HepG2 (cell line): ENCODE measurements at regions of chr5 and their contacts with region 1.

Region 1: GRCh38 chr5:103139264-103139865 is 19.3 kb downstream of the PPIP5K2 start:
- DNase-seq: peak; percentile 69
- ATAC-seq: peak; percentile 98
- H3K4me3 ChIP-seq: no peak overlapping the region
- H3K27ac ChIP-seq: no peak overlapping the region
- H3K4me1 ChIP-seq: no peaks in the 10 kb centered on the region
- H3K27me3 ChIP-seq: no peaks in the 10 kb centered on the region
- CTCF ChIP-seq: peak; percentile 90
- EP300 ChIP-seq: no peak
- POLR2A ChIP-seq: no peak
- RAD21 ChIP-seq: peak; percentile 78

Region 2: DNA sequence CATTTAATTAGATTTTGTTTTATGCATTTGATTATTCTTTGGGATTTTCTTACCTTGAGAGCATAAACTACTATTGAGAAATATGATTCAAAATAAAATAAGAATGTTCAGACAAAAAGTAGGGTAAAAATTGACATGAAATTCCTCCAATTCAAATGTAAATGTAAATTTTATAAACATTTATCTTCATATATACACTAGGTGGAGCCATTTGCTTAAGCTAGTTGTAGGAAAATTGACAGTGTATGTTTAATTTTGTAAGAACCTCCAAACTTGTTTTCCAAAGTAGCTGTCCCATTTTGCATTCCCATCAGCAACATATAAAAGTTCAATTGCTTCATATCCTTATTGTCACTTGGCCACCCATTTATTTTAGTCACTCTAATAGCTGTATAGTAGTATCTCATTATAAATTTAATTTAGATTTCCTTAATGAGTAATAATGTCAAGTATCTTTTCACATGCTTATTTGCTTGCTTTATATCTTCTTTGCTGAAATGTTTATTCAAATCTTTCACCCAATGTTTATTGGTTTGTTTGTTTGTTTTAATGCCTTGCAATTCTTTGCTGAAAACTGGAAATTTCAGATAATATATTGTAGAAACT is 602.9 kb before region 1 on chr5:
- CTCF ChIA-PET with region 1: no interaction called
- POLR2A ChIA-PET with region 1: no interaction called
- in situ Hi-C with region 1: no loop called
- intact Hi-C with region 1: loop called (anchors 5 kb)
- DNase-seq: no peak
- ATAC-seq: no peak
- H3K4me3 ChIP-seq: no peak overlapping the region
- H3K27ac ChIP-seq: no peak overlapping the region
- H3K4me1 ChIP-seq: peaks cover 4% of the 10 kb centered on the region; the same call in 1 of the 2 replicates
- H3K27me3 ChIP-seq: no peaks in the 10 kb centered on the region
- CTCF ChIP-seq: no peak
- EP300 ChIP-seq: no peak
- POLR2A ChIP-seq: no peak
- RAD21 ChIP-seq: no peak

Region 3: GRCh38 chr5:102681407-102681983 is 457.9 kb before region 1 on chr5:
- CTCF ChIA-PET with region 1: interaction called, 7 read pairs
- POLR2A ChIA-PET with region 1: no interaction called
- in situ Hi-C with region 1: no loop called
- intact Hi-C with region 1: loop called (anchors 1 kb)
- DNase-seq: peak; percentile 46
- ATAC-seq: peak; percentile 87
- H3K4me3 ChIP-seq: no peak overlapping the region
- H3K27ac ChIP-seq: no peak overlapping the region
- H3K4me1 ChIP-seq: no peaks in the 10 kb centered on the region; the same call in 1 of the 2 replicates
- H3K27me3 ChIP-seq: no peaks in the 10 kb centered on the region
- CTCF ChIP-seq: peak; percentile 84
- EP300 ChIP-seq: no peak
- POLR2A ChIP-seq: no peak
- RAD21 ChIP-seq: 0 out of 2 replicates have a peak, but pooled peaks have one; percentile 26

Region 4: GRCh38 chr5:102971697-102972293 is 167.6 kb before region 1 on chr5:
- CTCF ChIA-PET with region 1: no interaction called
- POLR2A ChIA-PET with region 1: no interaction called
- in situ Hi-C with region 1: no loop called
- intact Hi-C with region 1: loop called (anchors 1 kb)
- DNase-seq: peak; percentile 1
- ATAC-seq: peak; percentile 65
- H3K4me3 ChIP-seq: no peak overlapping the region
- H3K27ac ChIP-seq: no peak overlapping the region
- H3K4me1 ChIP-seq: no peaks in the 10 kb centered on the region
- H3K27me3 ChIP-seq: no peaks in the 10 kb centered on the region
- CTCF ChIP-seq: peak; percentile 41; the same call in 1 of the 2 replicates
- EP300 ChIP-seq: no peak
- POLR2A ChIP-seq: no peak
- RAD21 ChIP-seq: no peak

Region 5: GRCh38 chr5:103119765-103120606 is 19.4 kb before region 1 on chr5 and contains the starts of genes GIN1 and PPIP5K2:
- CTCF ChIA-PET with region 1: no interaction called
- POLR2A ChIA-PET with region 1: no interaction called
- in situ Hi-C with region 1: no loop called
- intact Hi-C with region 1: loop called (anchors 1 kb)
- DNase-seq: peak; percentile 97
- ATAC-seq: peak; percentile 97
- H3K4me3 ChIP-seq: peak within 1 kb of the TSS; percentile 91 to 97 (median 94)
- H3K27ac ChIP-seq: peak within 1 kb of the TSS; percentile 98
- H3K4me1 ChIP-seq: peaks cover 33% of the 10 kb centered on the region
- H3K27me3 ChIP-seq: no peaks in the 10 kb centered on the region; a peak in 1 of 5 replicates
- CTCF ChIP-seq: no peak
- EP300 ChIP-seq: peak in 1 of 2 experiments; percentile 66; a peak in 3 of 4 replicates
- POLR2A ChIP-seq: peak; percentile 86 to 93
- RAD21 ChIP-seq: peak; percentile 45; the same call in 1 of the 2 replicates
- total RNA-seq, gene GIN1: 7.7 and 9.5 TPM in 2 replicates
- total RNA-seq, gene PPIP5K2: 45.6 and 85.2 TPM in 2 replicates

Region 6: GRCh38 chr5:103402851-103403250 is 263.5 kb after region 1 on chr5:
- CTCF ChIA-PET with region 1: no interaction called
- POLR2A ChIA-PET with region 1: no interaction called
- in situ Hi-C with region 1: no loop called
- intact Hi-C with region 1: no loop called
- DNase-seq: no peak
- ATAC-seq: no peak
- H3K4me3 ChIP-seq: no peak overlapping the region
- H3K27ac ChIP-seq: no peak overlapping the region
- H3K4me1 ChIP-seq: no peaks in the 10 kb centered on the region
- H3K27me3 ChIP-seq: no peaks in the 10 kb centered on the region
- CTCF ChIP-seq: no peak
- EP300 ChIP-seq: no peak
- POLR2A ChIP-seq: no peak
- RAD21 ChIP-seq: no peak